Gastrocnemius medialis (tissue), 4 donors: ENCODE measurements at regions of chr20 and their contacts with region 1.

Region 1: DNA sequence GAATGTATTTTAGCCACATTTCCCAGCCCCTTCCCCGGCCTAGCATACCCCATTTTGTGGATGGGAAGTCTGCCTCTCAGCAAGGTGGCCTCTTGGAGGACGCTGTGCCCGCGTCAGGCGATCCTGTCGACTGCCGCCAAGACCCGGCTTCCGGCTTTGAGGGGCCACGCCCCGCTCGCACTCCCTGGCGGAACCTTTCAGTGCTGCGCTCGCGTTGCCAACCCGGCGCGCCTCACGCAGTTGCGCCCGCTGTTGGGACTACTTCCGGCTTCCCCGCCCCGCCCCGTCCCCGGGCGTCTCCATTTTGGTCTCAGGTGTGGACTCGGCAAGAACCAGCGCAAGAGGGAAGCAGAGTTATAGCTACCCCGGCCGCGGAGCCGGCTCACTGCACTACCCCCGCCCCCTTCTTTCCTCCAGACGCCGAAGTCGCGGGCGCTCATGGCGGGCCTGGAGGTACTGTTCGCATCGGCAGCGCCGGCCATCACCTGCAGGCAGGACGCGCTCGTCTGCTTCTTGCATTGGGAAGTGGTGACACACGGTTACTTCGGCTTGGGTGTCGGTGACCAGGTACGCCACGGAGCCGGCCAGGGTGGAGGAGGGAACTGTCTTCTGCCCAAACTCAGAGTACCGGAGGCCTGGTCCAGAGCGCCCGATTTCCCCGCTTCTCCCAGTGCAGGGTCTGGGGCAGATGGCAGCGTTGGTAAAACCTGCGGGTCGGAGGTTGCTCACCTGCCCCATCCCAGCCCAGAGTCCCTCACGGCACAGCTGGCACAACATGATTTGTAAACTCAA is at the start of gene PSMF1:
- DNase-seq: peak; percentile 89 to 93
- ATAC-seq: peak; percentile 92 to 96
- H3K4me3 ChIP-seq: peak within 1 kb of the TSS; percentile 85 to 100 (median 97)
- H3K27ac ChIP-seq: peak within 1 kb of the TSS; percentile 89 to 96 (median 92)
- H3K4me1 ChIP-seq: peaks cover 48 to 53% of the 10 kb centered on the region in 2 donors
- H3K27me3 ChIP-seq: no peaks in the 10 kb centered on the region
- CTCF ChIP-seq: peak in 4 of 5 experiments; percentile 4 to 35 (median 21)
- POLR2A ChIP-seq: peak; percentile 33 to 43
- total RNA-seq, gene PSMF1: 174 to 433 (median 247) TPM

Region 2: GRCh38 chr20:324177-325044 is 794.1 kb before region 1 on chr20:
- in situ Hi-C with region 1: no loop called
- intact Hi-C with region 1: loop called (anchors 10 kb)
- DNase-seq: peak; percentile 80 to 87
- ATAC-seq: peak; percentile 77 to 80
- H3K4me3 ChIP-seq: peak overlapping the region; percentile 67 to 73 (median 70)
- H3K27ac ChIP-seq: peak overlapping the region; percentile 80 to 93 (median 86)
- H3K4me1 ChIP-seq: peaks cover 5% of the 10 kb centered on the region in 2 donors
- H3K27me3 ChIP-seq: peaks cover 0 to 7% (median 2%) of the 10 kb centered on the region in 3 donors
- CTCF ChIP-seq: peak in 3 of 5 experiments; percentile 16 to 42 (median 25)
- POLR2A ChIP-seq: peak; percentile 83 to 84

Region 3: GRCh38 chr20:653110-653589 is 465.4 kb before region 1 on chr20 and contains the start of gene SRXN1:
- in situ Hi-C with region 1: no loop called
- intact Hi-C with region 1: loop called (anchors 5 kb)
- DNase-seq: peak; percentile 86 to 92
- ATAC-seq: peak; percentile 88 to 90
- H3K4me3 ChIP-seq: peak within 1 kb of the TSS; percentile 76 to 99 (median 82)
- H3K27ac ChIP-seq: peak within 1 kb of the TSS; percentile 83 to 99 (median 88)
- H3K4me1 ChIP-seq: peaks cover 19 to 21% of the 10 kb centered on the region in 2 donors
- H3K27me3 ChIP-seq: no peaks in the 10 kb centered on the region
- CTCF ChIP-seq: peak; percentile 35 to 80 (median 78)
- POLR2A ChIP-seq: peak; percentile 84 to 93
- total RNA-seq, gene SRXN1: 87.9 to 170 (median 128) TPM

Region 4: GRCh38 chr20:833450-834150 is 284.9 kb before region 1 on chr20 and contains the start of gene FAM110A:
- in situ Hi-C with region 1: loop called in 1 of 4 experiments (anchors 10 kb)
- intact Hi-C with region 1: no loop called
- DNase-seq: peak; percentile 91 to 95
- ATAC-seq: peak; percentile 92 to 96
- H3K4me3 ChIP-seq: peak within 1 kb of the TSS; percentile 75 to 90 (median 83)
- H3K27ac ChIP-seq: peak within 1 kb of the TSS; percentile 82 to 86 (median 84)
- H3K4me1 ChIP-seq: peaks cover 32% of the 10 kb centered on the region in 2 donors
- H3K27me3 ChIP-seq: no peaks in the 10 kb centered on the region
- CTCF ChIP-seq: no peak
- POLR2A ChIP-seq: no peak
- total RNA-seq, gene FAM110A: 0.25 to 6.2 (median 1.9) TPM

Region 5: GRCh38 chr20:1144401-1145172 is 26.1 kb after region 1 on chr20:
- in situ Hi-C with region 1: no loop called
- intact Hi-C with region 1: no loop called
- DNase-seq: no peak
- ATAC-seq: no peak
- H3K4me3 ChIP-seq: no peak overlapping the region
- H3K27ac ChIP-seq: no peak overlapping the region
- H3K4me1 ChIP-seq: no peaks in the 10 kb centered on the region
- H3K27me3 ChIP-seq: no peaks in the 10 kb centered on the region
- CTCF ChIP-seq: no peak
- POLR2A ChIP-seq: no peak

Region 6: DNA sequence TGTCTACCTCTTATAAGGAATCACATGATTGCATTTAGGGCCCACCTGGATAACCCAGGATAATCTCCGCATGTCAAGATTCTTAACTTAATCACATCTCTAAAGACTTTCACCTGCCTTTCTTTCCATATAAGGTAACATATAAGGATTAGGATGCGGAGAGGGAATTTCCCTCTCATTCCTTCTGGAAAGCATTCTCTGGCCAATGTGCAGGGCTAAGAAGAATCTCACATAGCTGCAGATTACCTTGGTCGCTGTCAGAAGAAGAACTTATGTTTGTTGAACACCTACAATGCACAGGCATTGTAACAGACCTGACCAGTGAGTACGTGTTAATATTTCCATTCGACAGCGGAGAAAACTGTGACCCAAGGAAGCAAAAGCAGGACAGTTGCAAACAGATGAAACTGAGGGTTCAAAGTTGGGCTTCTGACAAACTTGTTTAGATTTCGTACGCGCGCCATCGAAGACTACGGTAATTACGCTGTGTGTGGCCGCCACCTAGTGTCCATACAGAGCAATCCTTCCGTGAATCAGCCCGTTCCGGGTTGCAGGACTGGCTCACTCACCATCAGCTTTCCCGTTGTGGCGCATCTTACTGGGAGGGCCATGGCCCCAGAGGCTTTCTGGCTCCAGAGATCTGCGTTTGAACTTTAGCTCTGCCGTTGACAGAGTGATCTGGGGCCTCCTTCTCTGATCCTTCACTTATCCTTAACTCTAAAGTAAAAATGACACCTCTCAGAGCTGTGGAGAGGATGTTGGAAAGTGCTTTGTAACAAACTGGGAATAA is 94.3 kb after region 1 on chr20:
- in situ Hi-C with region 1: no loop called
- intact Hi-C with region 1: loop called (anchors 5 kb)
- DNase-seq: peak; percentile 41 to 51
- ATAC-seq: peak; percentile 86 to 96
- H3K4me3 ChIP-seq: peak overlapping the region in 1 of 4 donors; percentile 15
- H3K27ac ChIP-seq: no peak overlapping the region
- H3K4me1 ChIP-seq: peaks cover 4 to 6% of the 10 kb centered on the region in 2 donors
- H3K27me3 ChIP-seq: peaks cover 0 to 3% (median 0%) of the 10 kb centered on the region in 3 donors
- CTCF ChIP-seq: peak; percentile 60 to 82 (median 66)
- POLR2A ChIP-seq: no peak

Region 7: DNA sequence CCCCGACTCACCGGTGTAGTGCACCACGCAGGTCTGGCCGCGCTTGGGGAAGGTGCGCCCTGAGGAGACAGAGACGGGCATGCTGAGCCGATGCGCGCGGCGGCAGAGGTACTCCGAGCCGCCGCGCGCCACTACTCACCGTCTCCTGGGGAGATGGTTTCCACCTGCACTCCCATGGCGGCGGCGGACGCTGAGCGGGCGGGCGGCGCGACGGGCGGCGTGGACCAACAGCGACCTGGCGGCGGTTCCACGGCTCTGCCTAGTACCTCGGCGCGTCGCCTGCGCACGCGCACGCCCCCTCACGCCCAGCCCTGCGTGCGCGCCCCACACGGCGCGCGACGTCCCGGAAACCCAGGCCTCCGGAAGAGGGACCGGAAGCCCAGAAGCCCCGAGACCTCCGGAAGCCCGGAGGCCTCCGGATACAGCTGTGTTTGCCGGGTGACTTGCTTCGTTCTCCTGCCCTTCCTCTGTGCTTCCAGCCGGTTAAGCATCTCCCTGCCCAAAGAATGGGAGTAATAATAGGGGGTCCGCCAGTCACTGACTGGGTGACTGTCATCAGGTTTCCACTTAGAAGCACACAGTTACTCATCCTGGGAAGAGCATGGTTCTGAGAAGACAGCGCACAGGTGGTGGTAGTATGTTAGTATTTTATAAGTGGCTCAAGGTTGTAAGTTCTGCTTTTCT is 274.4 kb after region 1 on chr20 and contains the start of gene FKBP1A:
- in situ Hi-C with region 1: no loop called
- intact Hi-C with region 1: loop called (anchors 5 kb)
- DNase-seq: peak; percentile 73 to 92
- ATAC-seq: peak; percentile 89 to 92
- H3K4me3 ChIP-seq: peak within 1 kb of the TSS; percentile 76 to 96 (median 91)
- H3K27ac ChIP-seq: peak within 1 kb of the TSS; percentile 83 to 90 (median 87)
- H3K4me1 ChIP-seq: peaks cover 47 to 49% of the 10 kb centered on the region in 2 donors
- H3K27me3 ChIP-seq: peaks cover 0 to 3% (median 3%) of the 10 kb centered on the region in 3 donors
- CTCF ChIP-seq: peak in 3 of 5 experiments; percentile 4 to 39 (median 29)
- POLR2A ChIP-seq: peak; percentile 85 to 88
- total RNA-seq, gene FKBP1A: 27.7 to 89.4 (median 52.5) TPM

Region 8: GRCh38 chr20:2470423-2471193 is 1352.1 kb after region 1 on chr20 and contains the start of gene SNRPB:
- in situ Hi-C with region 1: loop called in 1 of 4 experiments (anchors 25 kb)
- intact Hi-C with region 1: loop called (anchors 2 kb)
- DNase-seq: peak; percentile 96 to 97
- ATAC-seq: peak; percentile 98 to 99
- H3K4me3 ChIP-seq: peak within 1 kb of the TSS; percentile 77 to 95 (median 84)
- H3K27ac ChIP-seq: peak within 1 kb of the TSS; percentile 86 to 95 (median 88)
- H3K4me1 ChIP-seq: peaks cover 12 to 15% of the 10 kb centered on the region in 2 donors
- H3K27me3 ChIP-seq: no peaks in the 10 kb centered on the region
- CTCF ChIP-seq: no peak
- POLR2A ChIP-seq: peak; percentile 86 to 96
- total RNA-seq, gene SNRPB: 131 to 209 (median 190) TPM